GM12878 (cell line): ENCODE measurements at regions of chr4 and their contacts with region 1.

Region 1: GRCh38 chr4:40199999-40200874 is 3.4 kb downstream of the RHOH start:
- DNase-seq: peak; percentile 93
- ATAC-seq: peak; percentile 52
- H3K4me3 ChIP-seq: peak overlapping the region; percentile 88
- H3K27ac ChIP-seq: peak overlapping the region; percentile 92
- H3K4me1 ChIP-seq: peaks cover 8% of the 10 kb centered on the region
- H3K27me3 ChIP-seq: no peaks in the 10 kb centered on the region
- CTCF ChIP-seq: no peak
- EP300 ChIP-seq: peak; percentile 79 to 93
- POLR2A ChIP-seq: peak; percentile 79
- RAD21 ChIP-seq: no peak

Region 2: DNA sequence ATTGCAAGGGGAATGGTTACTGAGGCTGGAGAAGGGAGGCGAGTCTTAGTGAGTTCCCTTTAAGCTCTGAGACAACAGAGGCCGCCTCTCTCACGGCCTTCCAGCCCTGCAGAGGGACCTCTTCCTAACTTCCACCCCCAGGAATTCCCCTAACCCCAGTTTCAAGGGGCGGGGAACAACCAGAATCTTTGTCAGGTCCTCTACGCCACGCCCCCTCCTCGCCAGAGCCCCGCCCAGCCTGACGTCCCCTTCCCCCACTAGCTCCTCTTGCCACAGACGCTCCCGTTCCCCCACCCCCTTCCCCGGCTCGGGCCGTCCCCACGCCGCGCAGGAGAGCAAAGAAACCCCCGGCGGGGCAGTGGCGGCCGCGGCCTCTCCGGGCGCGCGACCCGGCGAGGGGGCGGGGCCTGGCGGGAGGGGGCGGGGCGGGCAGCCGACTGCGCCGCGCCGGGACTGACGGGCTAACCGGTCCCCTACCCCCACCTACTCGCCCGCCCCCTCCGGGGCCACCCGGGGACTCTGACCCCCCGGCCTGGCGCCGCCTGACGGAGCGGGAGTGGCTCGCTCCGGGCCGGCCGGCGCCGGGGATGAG is 1155.8 kb before region 1 on chr4:
- CTCF ChIA-PET with region 1: no interaction called
- POLR2A ChIA-PET with region 1: no interaction called
- RAD21 ChIA-PET with region 1: no interaction called
- SMC1A ChIA-PET with region 1: no interaction called
- in situ Hi-C with region 1: no loop called
- intact Hi-C with region 1: loop called (anchors 10 kb)
- DNase-seq: peak; percentile 90
- ATAC-seq: peak; percentile 83
- H3K4me3 ChIP-seq: peak overlapping the region; percentile 83
- H3K27ac ChIP-seq: peak overlapping the region; percentile 81
- H3K4me1 ChIP-seq: peaks cover 14% of the 10 kb centered on the region
- H3K27me3 ChIP-seq: no peaks in the 10 kb centered on the region
- CTCF ChIP-seq: peak in 1 of 3 experiments; percentile 23; a peak in 1 of 6 replicates
- EP300 ChIP-seq: peak in 1 of 2 experiments; percentile 52; a peak in 1 of 4 replicates
- POLR2A ChIP-seq: peak; percentile 74
- RAD21 ChIP-seq: no peak

Region 3: GRCh38 chr4:39638354-39639240 is 561.6 kb before region 1 on chr4 and contains the start of gene SMIM14:
- CTCF ChIA-PET with region 1: no interaction called
- POLR2A ChIA-PET with region 1: no interaction called
- RAD21 ChIA-PET with region 1: no interaction called
- SMC1A ChIA-PET with region 1: interaction called, 4 read pairs
- in situ Hi-C with region 1: loop called (anchors 10 kb)
- intact Hi-C with region 1: no loop called
- DNase-seq: no peak
- ATAC-seq: peak; percentile 82
- H3K4me3 ChIP-seq: peak within 1 kb of the TSS; percentile 75
- H3K27ac ChIP-seq: peak within 1 kb of the TSS; percentile 43
- H3K4me1 ChIP-seq: peaks cover 5% of the 10 kb centered on the region; the same call in 1 of the 2 replicates
- H3K27me3 ChIP-seq: no peaks in the 10 kb centered on the region
- CTCF ChIP-seq: no peak
- EP300 ChIP-seq: peak; percentile 34 to 50; a peak in 1 of 4 replicates
- POLR2A ChIP-seq: peak; percentile 88
- RAD21 ChIP-seq: no peak; the same call in 1 of the 2 replicates
- polyA plus RNA-seq, gene SMIM14: 585 to 671 TPM

Region 4: GRCh38 chr4:40121515-40121914 is 78.7 kb before region 1 on chr4:
- CTCF ChIA-PET with region 1: no interaction called
- POLR2A ChIA-PET with region 1: no interaction called
- RAD21 ChIA-PET with region 1: no interaction called
- SMC1A ChIA-PET with region 1: no interaction called
- in situ Hi-C with region 1: no loop called
- intact Hi-C with region 1: no loop called
- DNase-seq: peak; percentile 11
- ATAC-seq: peak; percentile 86
- H3K4me3 ChIP-seq: no peak overlapping the region
- H3K27ac ChIP-seq: no peak overlapping the region
- H3K4me1 ChIP-seq: no peaks in the 10 kb centered on the region
- H3K27me3 ChIP-seq: no peaks in the 10 kb centered on the region
- CTCF ChIP-seq: no peak
- EP300 ChIP-seq: no peak
- POLR2A ChIP-seq: no peak
- RAD21 ChIP-seq: no peak

Region 5: GRCh38 chr4:40173470-40173875 is 26.8 kb before region 1 on chr4:
- CTCF ChIA-PET with region 1: interaction called, 3 read pairs
- POLR2A ChIA-PET with region 1: interaction called, 4 read pairs
- RAD21 ChIA-PET with region 1: interaction called, 16 read pairs
- SMC1A ChIA-PET with region 1: interaction called, 8 read pairs
- in situ Hi-C with region 1: no loop called
- intact Hi-C with region 1: no loop called
- DNase-seq: no peak
- ATAC-seq: peak; percentile 82
- H3K4me3 ChIP-seq: no peak overlapping the region
- H3K27ac ChIP-seq: peak overlapping the region; percentile 45
- H3K4me1 ChIP-seq: peaks cover 21% of the 10 kb centered on the region
- H3K27me3 ChIP-seq: no peaks in the 10 kb centered on the region
- CTCF ChIP-seq: no peak
- EP300 ChIP-seq: no peak
- POLR2A ChIP-seq: peak; percentile 47
- RAD21 ChIP-seq: no peak

Region 6: GRCh38 chr4:40212674-40213527 is 12.7 kb after region 1 on chr4:
- CTCF ChIA-PET with region 1: interaction called, 33 read pairs
- POLR2A ChIA-PET with region 1: interaction called, 214 read pairs
- RAD21 ChIA-PET with region 1: interaction called, 179 read pairs
- SMC1A ChIA-PET with region 1: interaction called, 336 read pairs
- in situ Hi-C with region 1: no loop called
- intact Hi-C with region 1: no loop called
- DNase-seq: no peak
- ATAC-seq: peak; percentile 10
- H3K4me3 ChIP-seq: peak overlapping the region; percentile 57; the same call in 1 of the 2 replicates
- H3K27ac ChIP-seq: peak overlapping the region; percentile 27
- H3K4me1 ChIP-seq: peaks cover 45% of the 10 kb centered on the region
- H3K27me3 ChIP-seq: no peaks in the 10 kb centered on the region
- CTCF ChIP-seq: no peak
- EP300 ChIP-seq: no peak
- POLR2A ChIP-seq: no peak
- RAD21 ChIP-seq: no peak

Region 7: GRCh38 chr4:40316782-40317635 is 116.8 kb after region 1 on chr4:
- CTCF ChIA-PET with region 1: interaction called, 11 read pairs
- POLR2A ChIA-PET with region 1: interaction called, 6 read pairs
- RAD21 ChIA-PET with region 1: interaction called, 356 read pairs
- SMC1A ChIA-PET with region 1: interaction called, 374 read pairs
- in situ Hi-C with region 1: no loop called
- intact Hi-C with region 1: no loop called
- DNase-seq: peak; percentile 78
- ATAC-seq: peak; percentile 86
- H3K4me3 ChIP-seq: peak overlapping the region; percentile 62
- H3K27ac ChIP-seq: peak overlapping the region; percentile 75
- H3K4me1 ChIP-seq: peaks cover 10% of the 10 kb centered on the region
- H3K27me3 ChIP-seq: no peaks in the 10 kb centered on the region
- CTCF ChIP-seq: peak; percentile 75 to 88 (median 82)
- EP300 ChIP-seq: no peak
- POLR2A ChIP-seq: 0 out of 2 replicates have a peak, but pooled peaks have one; percentile 32
- RAD21 ChIP-seq: peak; percentile 74